Activated B cell treated with CpG ODN at 0.5 μM for 24 hours (primary cell): ENCODE measurements at regions of chr3 and their contacts with region 1.

Region 1: DNA sequence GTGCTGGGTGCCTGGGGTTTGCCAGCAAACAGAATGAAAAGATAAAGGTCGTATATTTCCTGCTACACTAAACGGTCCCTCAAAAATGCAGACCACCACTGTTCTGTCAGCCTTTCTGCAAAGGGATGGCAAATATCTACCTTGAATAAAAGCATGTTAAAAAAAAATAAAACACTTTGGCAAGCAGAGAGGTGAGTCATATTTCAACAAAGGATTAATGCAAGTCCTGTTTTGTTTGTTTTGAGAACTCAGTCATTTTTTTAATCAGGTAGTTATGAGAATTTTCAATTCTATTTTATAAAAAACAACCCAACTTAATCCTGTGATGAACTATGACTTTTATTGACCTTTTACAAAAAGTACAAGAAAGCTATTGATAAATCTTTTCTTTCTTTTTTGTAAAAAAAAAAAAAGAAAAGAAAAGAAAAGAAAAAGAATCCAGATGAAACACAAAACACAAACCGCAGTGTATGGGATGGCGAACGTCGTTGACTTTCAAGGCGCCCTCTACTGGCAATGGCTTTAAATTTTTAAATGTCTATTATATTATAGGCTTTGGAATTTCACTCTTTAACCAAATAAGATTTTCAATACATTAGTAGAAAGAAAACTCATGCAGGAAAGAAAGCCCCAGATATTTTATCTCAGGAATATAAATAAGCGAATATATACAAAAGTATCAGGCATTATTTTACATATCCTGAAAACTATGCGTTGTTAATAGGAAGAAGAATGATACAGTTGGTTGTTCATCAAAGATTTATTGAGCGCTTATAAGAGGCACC is 87.8 kb downstream of the NCEH1 start:
- DNase-seq: no peak
- ATAC-seq: no peak
- H3K4me3 Mint-ChIP-seq: no peak overlapping the region
- H3K27ac Mint-ChIP-seq: no peak overlapping the region
- H3K4me1 Mint-ChIP-seq: no peaks in the 10 kb centered on the region
- H3K27me3 Mint-ChIP-seq: peaks cover 3% of the 10 kb centered on the region
- CTCF ChIP-seq: peak; percentile 61

Region 2: DNA sequence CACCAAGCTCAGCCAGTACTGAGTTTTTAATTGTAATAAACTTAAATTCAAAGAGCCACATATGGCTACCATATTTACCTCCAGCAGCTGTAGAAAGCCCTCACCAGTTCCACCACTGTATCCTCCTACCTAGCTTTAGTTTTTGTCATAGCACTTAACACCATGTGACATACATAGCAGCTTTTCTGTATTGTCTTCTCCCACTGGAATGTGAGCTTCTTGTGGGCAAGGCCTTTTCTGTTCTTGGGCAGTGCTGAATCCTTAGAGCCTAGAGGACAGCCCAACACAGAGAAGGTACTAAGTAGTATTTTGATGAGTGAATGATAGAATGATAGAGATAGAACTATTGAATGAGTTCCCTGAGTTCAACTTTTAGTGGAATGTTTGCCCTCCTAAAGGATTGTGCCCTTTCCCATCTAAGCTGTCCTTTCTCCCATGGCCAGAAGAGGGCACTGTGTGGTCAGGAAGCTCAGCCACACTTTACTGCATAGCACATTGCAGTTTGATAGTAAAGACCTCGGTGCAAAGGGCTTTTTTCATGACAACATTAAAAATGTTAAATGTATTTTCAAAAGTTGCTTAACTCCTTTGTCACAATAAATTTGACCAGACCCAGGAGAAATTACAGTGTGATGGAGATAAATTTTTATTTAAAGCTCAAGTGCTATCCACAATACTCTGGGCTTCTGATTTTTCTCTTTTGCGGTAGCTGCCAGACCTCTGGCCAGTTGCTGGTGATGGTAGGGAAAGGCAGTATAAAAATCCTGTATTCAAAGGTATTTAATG is 290.7 kb before region 1 on chr3:
- CTCF ChIA-PET with region 1: interaction called, 4 read pairs
- POLR2A ChIA-PET with region 1: no interaction called
- intact Hi-C with region 1: loop called (anchors 1 kb)
- DNase-seq: peak; percentile 26
- ATAC-seq: peak; percentile 85
- H3K4me3 Mint-ChIP-seq: no peak overlapping the region
- H3K27ac Mint-ChIP-seq: no peak overlapping the region
- H3K4me1 Mint-ChIP-seq: no peaks in the 10 kb centered on the region
- H3K27me3 Mint-ChIP-seq: no peaks in the 10 kb centered on the region
- CTCF ChIP-seq: peak; percentile 97

Region 3: GRCh38 chr3:172461530-172462138 is 161.5 kb before region 1 on chr3:
- CTCF ChIA-PET with region 1: interaction called, 8 read pairs
- POLR2A ChIA-PET with region 1: interaction called, 4 read pairs
- intact Hi-C with region 1: loop called (anchors 1 kb)
- DNase-seq: no peak
- ATAC-seq: peak; percentile 61
- H3K4me3 Mint-ChIP-seq: no peak overlapping the region
- H3K27ac Mint-ChIP-seq: no peak overlapping the region
- H3K4me1 Mint-ChIP-seq: no peaks in the 10 kb centered on the region
- H3K27me3 Mint-ChIP-seq: peaks cover 10% of the 10 kb centered on the region
- CTCF ChIP-seq: peak; percentile 92

Region 4: GRCh38 chr3:172511783-172512762 is 111.0 kb before region 1 on chr3:
- CTCF ChIA-PET with region 1: no interaction called
- POLR2A ChIA-PET with region 1: no interaction called
- intact Hi-C with region 1: no loop called
- DNase-seq: no peak
- ATAC-seq: peak; percentile 79
- H3K4me3 Mint-ChIP-seq: peak overlapping the region; percentile 57
- H3K27ac Mint-ChIP-seq: peak overlapping the region; percentile 84
- H3K4me1 Mint-ChIP-seq: peaks cover 64% of the 10 kb centered on the region
- H3K27me3 Mint-ChIP-seq: no peaks in the 10 kb centered on the region
- CTCF ChIP-seq: no peak

Region 5: GRCh38 chr3:172580680-172581401 is 42.3 kb before region 1 on chr3:
- CTCF ChIA-PET with region 1: no interaction called
- POLR2A ChIA-PET with region 1: interaction called, 15 read pairs
- intact Hi-C with region 1: no loop called
- DNase-seq: no peak
- ATAC-seq: no peak
- H3K4me3 Mint-ChIP-seq: no peak overlapping the region
- H3K27ac Mint-ChIP-seq: peak overlapping the region; percentile 14
- H3K4me1 Mint-ChIP-seq: peaks cover 26% of the 10 kb centered on the region
- H3K27me3 Mint-ChIP-seq: no peaks in the 10 kb centered on the region
- CTCF ChIP-seq: no peak

Region 6: GRCh38 chr3:172666873-172667694 is 44.0 kb after region 1 on chr3:
- CTCF ChIA-PET with region 1: no interaction called
- POLR2A ChIA-PET with region 1: no interaction called
- intact Hi-C with region 1: loop called (anchors 1 kb)
- DNase-seq: no peak
- ATAC-seq: peak; percentile 69
- H3K4me3 Mint-ChIP-seq: no peak overlapping the region
- H3K27ac Mint-ChIP-seq: no peak overlapping the region
- H3K4me1 Mint-ChIP-seq: peaks cover 14% of the 10 kb centered on the region
- H3K27me3 Mint-ChIP-seq: no peaks in the 10 kb centered on the region
- CTCF ChIP-seq: no peak

Region 7: DNA sequence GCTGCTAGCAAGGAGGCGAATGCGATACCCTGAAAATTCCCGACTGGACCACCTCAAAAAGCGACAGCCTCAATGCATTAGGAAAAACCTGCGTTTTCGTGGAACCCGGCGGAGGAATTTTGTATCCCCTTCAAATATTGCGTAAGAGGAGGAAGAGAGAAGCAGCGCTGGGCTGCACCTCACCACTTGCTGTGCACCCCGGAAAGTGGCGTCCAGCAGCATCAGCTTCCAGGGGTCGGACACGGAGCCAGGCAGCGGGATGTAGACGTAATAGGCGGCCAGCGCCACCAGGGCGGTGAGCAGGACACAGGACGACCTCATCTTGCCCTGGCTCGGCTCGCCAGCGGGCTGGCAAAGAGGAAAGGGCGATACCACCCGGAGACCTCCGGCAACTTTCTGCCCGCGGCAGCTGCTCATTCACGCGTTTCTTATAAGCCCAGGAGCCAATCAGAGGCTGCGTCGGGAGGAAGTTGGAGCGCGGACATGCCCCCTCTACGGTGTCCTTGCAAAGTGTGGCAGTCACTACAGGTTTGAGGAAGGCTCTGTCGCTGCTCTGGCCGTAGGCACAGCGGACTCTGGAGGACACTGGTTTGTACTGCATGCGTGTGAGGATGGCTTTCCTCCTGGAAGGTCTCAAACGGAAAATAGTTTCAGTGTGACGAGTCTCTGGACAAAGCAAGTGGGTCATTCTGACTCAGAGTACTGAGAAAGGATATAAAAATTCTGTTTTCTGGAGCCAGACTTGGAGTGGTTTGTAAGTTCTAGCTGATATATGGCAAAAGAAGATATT is 87.8 kb after region 1 on chr3 and contains the start of gene NCEH1:
- CTCF ChIA-PET with region 1: no interaction called
- POLR2A ChIA-PET with region 1: no interaction called
- intact Hi-C with region 1: loop called (anchors 1 kb)
- DNase-seq: peak; percentile 70
- ATAC-seq: peak; percentile 100
- H3K4me3 Mint-ChIP-seq: peak within 1 kb of the TSS; percentile 97
- H3K27ac Mint-ChIP-seq: peak within 1 kb of the TSS; percentile 83
- H3K4me1 Mint-ChIP-seq: peaks cover 22% of the 10 kb centered on the region
- H3K27me3 Mint-ChIP-seq: no peaks in the 10 kb centered on the region
- CTCF ChIP-seq: no peak
- total RNA-seq, gene NCEH1: 4.5 and 4.9 TPM in 2 replicates

Region 8: GRCh38 chr3:173096994-173097785 is 474.1 kb after region 1 on chr3:
- CTCF ChIA-PET with region 1: no interaction called
- POLR2A ChIA-PET with region 1: no interaction called
- intact Hi-C with region 1: no loop called
- DNase-seq: no peak
- ATAC-seq: no peak
- H3K4me3 Mint-ChIP-seq: no peak overlapping the region
- H3K27ac Mint-ChIP-seq: no peak overlapping the region
- H3K4me1 Mint-ChIP-seq: no peaks in the 10 kb centered on the region
- H3K27me3 Mint-ChIP-seq: no peaks in the 10 kb centered on the region
- CTCF ChIP-seq: no peak